Left cardiac atrium (tissue), 4 donors: ENCODE measurements at regions of chr11 and their contacts with region 1.

Region 1: DNA sequence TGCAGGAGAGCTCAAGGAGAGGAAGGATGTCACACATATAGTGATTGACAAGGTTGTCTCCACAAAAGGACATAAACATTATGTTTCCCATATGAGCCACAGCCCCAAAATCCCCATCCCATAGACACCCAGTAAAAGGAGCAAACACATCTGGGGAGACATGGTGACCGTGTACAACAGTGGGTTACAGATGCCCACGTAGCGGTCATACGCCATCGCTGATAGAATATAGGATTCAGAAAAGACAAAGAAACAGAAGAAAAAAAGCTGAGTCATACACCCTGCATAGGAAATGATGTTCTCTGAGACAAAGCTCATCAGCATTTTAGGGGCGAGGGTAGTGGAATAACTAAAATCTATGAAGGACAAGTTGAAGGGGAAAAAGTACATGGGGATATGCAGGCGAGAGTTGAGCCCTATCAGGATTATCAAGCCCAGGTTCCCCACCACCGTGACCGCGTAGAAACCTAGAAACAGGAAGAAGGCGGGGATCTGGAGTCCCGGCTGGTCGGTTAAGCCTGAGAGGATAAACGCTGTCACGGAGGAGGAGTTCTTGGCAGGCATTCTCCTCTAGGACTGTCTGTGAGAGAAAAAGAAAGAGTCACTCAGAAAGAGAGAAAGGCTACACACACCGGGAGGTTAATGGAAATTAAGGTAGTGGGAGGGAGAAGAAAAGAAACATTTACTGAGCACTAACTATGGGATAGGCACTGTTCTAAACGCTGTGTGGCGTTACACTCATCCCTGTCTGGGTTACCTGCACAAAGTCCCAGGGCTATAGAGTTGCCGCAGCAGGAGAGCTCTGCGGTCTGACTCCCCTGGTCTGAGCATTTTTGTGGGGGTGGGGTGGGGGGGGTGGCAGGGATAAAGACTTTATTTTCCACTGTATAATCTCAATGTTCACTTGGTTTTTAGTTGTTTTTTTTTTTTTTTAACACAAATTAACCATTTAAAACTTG is 36.1 kb upstream of the OR8B8 start:
- DNase-seq: peak; percentile 50
- ATAC-seq: peak; percentile 72 to 94

Region 2: DNA sequence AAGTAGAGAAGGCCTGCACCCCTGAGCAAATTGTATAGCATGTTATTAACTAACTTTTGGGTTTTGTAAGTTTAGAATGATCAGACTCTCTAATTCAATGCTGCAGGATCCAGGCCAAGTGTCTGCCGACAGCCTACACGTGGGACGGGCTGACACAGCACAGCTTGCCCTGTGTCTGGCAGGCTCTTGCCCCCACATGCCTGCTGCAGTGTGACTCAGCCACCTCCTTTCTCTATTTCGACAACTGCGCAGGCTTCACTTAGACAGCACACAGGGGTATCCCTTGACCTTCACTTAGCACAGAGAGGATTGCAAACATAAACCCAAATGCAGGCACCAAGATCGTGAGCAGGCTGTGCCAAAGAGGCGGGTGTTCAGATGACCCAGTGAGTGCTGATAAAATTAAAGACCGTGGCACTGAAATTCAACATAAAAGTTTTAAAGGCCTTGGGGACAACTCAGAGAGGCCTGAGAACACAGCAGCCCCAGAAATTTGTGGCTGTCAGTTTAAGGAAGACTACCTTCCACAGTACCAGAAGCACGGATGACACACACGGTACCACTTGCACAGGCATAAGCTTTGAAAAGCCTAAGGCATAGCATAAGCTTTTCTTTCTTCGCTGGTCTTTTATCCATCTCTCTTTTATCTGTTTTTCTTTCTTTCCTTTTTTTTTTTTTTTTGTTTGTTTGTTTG is 865.0 kb before region 1 on chr11:
- intact Hi-C with region 1: no loop called
- DNase-seq: peak; percentile 77
- ATAC-seq: peak; percentile 98 to 99

Region 3: DNA sequence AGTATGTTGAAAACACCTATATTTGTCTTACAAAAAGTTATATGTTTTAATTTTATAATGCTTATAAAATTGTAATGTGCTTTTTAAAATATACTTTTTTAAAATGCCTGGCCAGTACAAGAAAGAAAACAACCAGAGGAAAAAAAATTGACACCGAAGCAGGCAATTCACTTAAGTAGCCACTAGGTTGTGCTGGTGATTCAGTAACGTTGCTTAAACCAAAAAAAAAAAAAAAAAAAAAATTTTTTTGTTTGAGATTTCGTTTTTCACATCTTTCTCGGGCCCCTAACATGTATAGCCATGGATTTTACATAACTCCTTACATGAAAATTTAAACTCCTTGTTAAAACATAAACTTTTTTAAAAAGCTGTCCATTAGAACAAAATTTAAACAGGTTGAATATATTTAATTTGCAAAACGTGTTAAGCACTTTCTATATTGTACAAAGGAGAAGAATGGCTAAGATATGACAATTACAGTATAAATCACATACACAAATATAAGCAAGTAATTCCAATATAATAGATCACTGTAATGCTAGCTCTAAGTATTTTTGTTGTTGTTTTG is 66.2 kb before region 1 on chr11:
- intact Hi-C with region 1: loop called in 1 of 2 experiments (anchors 5 kb)
- DNase-seq: no peak
- ATAC-seq: no peak

Region 4: GRCh38 chr11:124586238-124586860 is 104.7 kb after region 1 on chr11:
- intact Hi-C with region 1: loop called in 1 of 2 experiments (anchors 10 kb)
- DNase-seq: peak; percentile 70
- ATAC-seq: peak in 1 of 2 donors; percentile 53